ENCODE measurements at regions of chr4 and their contacts with region 1.

Region 1: GRCh38 chr4:43132010-43132582 is 239.6 kb downstream of the GRXCR1 start:
- DNase-seq: peak; percentile 62 to 86
- ATAC-seq: peak; percentile 68
- H3K4me3 ChIP-seq: no peak overlapping the region
- H3K27ac ChIP-seq: no peak overlapping the region
- H3K4me1 ChIP-seq: no peaks in the 10 kb centered on the region
- H3K27me3 ChIP-seq: no peaks in the 10 kb centered on the region

Region 2: DNA sequence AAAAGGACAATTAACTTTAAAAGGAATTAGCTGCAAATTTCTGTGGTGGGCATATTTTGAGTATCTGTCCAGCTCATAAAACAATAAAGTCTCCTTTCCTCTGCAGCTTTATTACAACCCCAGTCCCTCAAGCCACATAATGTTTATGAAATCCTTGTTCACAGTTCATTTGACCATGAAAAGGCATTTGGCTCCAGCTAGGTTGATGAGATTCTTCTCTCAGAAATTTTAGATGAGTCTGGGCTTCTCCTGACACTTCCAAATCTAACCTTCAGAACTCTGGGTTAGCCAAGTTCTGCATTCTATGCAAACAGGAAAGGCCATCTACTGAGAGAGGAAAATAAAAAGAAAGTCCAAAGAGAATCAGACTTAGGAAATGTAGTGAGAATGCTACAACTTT is 82.8 kb before region 1 on chr4:
- intact Hi-C with region 1: no loop called
- DNase-seq: no peak
- ATAC-seq: no peak
- H3K4me3 ChIP-seq: no peak overlapping the region
- H3K27ac ChIP-seq: no peak overlapping the region
- H3K4me1 ChIP-seq: peaks cover 0 to 3% of the 10 kb centered on the region in 2 donors
- H3K27me3 ChIP-seq: no peaks in the 10 kb centered on the region

Region 3: GRCh38 chr4:43456383-43456782 is 324.3 kb after region 1 on chr4:
- intact Hi-C with region 1: loop called in 1 of 2 experiments (anchors 10 kb)
- DNase-seq: no peak
- ATAC-seq: no peak
- H3K4me3 ChIP-seq: no peak overlapping the region
- H3K27ac ChIP-seq: no peak overlapping the region
- H3K4me1 ChIP-seq: peaks cover 0 to 3% of the 10 kb centered on the region in 2 donors
- H3K27me3 ChIP-seq: no peaks in the 10 kb centered on the region